A549 (cell line): ENCODE measurements at regions of chr2 and their contacts with region 1.

Region 1: DNA sequence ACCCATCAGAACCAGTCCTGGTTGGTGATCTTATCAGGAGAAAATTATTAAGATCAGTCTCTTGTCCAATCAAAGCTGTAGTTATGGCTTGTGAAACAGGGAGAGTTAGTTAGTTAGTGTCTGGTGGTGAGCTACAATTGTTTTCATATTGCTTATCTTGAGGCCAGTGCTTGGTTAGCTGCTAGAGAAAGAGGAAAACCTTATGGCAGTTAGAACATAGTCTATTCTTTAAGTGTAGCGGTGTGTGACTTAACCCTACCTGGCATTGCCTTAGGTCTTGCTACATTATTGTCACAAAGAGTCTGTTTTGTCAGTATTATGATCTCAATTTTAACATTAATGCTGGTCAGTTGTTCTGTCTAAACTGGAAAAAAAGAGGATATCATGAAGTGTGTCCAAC is 11.5 kb upstream of the ABCA12 start:
- DNase-seq: no peak
- ATAC-seq: no peak
- H3K4me3 ChIP-seq: no peak overlapping the region
- H3K27ac ChIP-seq: no peak overlapping the region
- H3K4me1 ChIP-seq: no peaks in the 10 kb centered on the region
- CTCF ChIP-seq: no peak
- EP300 ChIP-seq: no peak
- POLR2A ChIP-seq: no peak
- RAD21 ChIP-seq: no peak

Region 2: GRCh38 chr2:214982879-214983278 is 167.0 kb before region 1 on chr2:
- CTCF ChIA-PET with region 1: no interaction called
- POLR2A ChIA-PET with region 1: no interaction called
- DNase-seq: no peak
- ATAC-seq: no peak
- H3K4me3 ChIP-seq: no peak overlapping the region
- H3K27ac ChIP-seq: no peak overlapping the region
- H3K4me1 ChIP-seq: no peaks in the 10 kb centered on the region
- CTCF ChIP-seq: no peak
- EP300 ChIP-seq: no peak
- POLR2A ChIP-seq: no peak
- RAD21 ChIP-seq: no peak

Region 3: GRCh38 chr2:215136669-215137328 is 13.1 kb before region 1 on chr2:
- CTCF ChIA-PET with region 1: no interaction called
- POLR2A ChIA-PET with region 1: no interaction called
- DNase-seq: no peak
- ATAC-seq: no peak
- H3K4me3 ChIP-seq: no peak overlapping the region
- H3K27ac ChIP-seq: peak overlapping the region; percentile 20 to 74; a peak in 3 of 6 replicates
- H3K4me1 ChIP-seq: peaks cover 22% of the 10 kb centered on the region
- CTCF ChIP-seq: no peak
- EP300 ChIP-seq: no peak
- POLR2A ChIP-seq: no peak
- RAD21 ChIP-seq: no peak

Region 4: DNA sequence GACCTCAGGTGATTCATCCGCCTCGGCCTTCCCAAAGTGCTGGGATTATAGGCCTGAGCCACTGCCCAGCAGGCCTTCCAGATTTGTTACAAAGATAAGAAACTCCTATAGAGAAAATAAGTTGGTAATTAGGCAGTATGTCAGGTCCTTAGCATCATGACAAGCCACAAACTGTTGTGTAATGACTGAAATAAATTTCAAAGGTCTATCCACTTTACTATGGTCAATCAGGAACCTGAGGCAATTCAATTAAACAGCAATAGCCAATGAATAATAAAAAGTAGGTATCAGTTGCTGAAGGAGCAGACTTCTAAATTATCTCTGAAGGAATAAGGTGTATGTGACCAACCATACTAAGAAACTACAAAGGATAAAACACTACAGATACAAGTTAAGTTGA is 99.6 kb after region 1 on chr2:
- CTCF ChIA-PET with region 1: no interaction called
- POLR2A ChIA-PET with region 1: no interaction called
- DNase-seq: no peak
- ATAC-seq: no peak
- H3K4me3 ChIP-seq: no peak overlapping the region
- H3K27ac ChIP-seq: no peak overlapping the region
- H3K4me1 ChIP-seq: no peaks in the 10 kb centered on the region
- CTCF ChIP-seq: no peak
- EP300 ChIP-seq: no peak
- POLR2A ChIP-seq: no peak
- RAD21 ChIP-seq: no peak

Region 5: DNA sequence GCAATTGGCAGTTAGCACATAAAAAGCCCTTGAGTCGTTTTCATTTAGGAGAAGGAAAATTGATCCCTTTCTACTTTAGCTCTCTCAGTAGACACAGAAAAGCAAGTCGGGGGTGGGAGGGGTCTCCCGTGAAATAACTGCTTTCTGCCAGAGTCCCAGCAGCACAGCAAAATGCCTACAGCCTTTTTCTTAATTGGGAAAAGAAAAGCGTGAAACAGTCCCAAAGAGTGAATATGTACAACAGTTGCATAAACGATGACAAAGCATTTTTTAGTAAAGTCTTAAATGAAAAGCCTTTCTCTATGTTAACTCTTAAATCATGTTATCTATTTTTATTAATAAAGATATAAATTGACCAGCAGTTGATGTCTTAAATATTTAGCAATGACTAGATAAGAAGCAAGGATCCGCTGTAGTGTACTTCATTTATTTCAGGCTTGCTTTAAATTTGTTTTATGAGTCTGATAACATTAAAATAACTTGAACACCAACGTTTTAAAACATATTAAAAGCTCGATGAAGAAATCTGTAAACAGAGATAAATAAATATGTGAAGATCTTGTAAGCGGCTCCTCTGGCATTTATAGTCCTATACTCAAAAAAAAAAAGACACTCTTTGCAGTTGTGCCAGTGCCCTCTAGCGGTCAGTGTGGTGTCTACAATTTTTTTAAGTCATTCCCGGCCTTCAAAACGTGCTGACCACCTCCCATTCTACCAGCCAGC is 119.7 kb after region 1 on chr2:
- CTCF ChIA-PET with region 1: interaction called, 11 read pairs
- POLR2A ChIA-PET with region 1: no interaction called
- DNase-seq: peak; percentile 18 to 82
- ATAC-seq: peak; percentile 76 to 89; a peak in 5 of 6 replicates
- H3K4me3 ChIP-seq: peak overlapping the region; percentile 20; the same call in 1 of the 3 replicates
- H3K27ac ChIP-seq: peak overlapping the region; percentile 43 to 71; a peak in 4 of 6 replicates
- H3K4me1 ChIP-seq: peaks cover 5% of the 10 kb centered on the region; the same call in 2 of the 3 replicates
- CTCF ChIP-seq: peak; percentile 84
- EP300 ChIP-seq: no peak
- POLR2A ChIP-seq: no peak
- RAD21 ChIP-seq: peak; percentile 77 to 84